ENCODE measurements at regions of chr17 and their contacts with region 1.

Region 1: DNA sequence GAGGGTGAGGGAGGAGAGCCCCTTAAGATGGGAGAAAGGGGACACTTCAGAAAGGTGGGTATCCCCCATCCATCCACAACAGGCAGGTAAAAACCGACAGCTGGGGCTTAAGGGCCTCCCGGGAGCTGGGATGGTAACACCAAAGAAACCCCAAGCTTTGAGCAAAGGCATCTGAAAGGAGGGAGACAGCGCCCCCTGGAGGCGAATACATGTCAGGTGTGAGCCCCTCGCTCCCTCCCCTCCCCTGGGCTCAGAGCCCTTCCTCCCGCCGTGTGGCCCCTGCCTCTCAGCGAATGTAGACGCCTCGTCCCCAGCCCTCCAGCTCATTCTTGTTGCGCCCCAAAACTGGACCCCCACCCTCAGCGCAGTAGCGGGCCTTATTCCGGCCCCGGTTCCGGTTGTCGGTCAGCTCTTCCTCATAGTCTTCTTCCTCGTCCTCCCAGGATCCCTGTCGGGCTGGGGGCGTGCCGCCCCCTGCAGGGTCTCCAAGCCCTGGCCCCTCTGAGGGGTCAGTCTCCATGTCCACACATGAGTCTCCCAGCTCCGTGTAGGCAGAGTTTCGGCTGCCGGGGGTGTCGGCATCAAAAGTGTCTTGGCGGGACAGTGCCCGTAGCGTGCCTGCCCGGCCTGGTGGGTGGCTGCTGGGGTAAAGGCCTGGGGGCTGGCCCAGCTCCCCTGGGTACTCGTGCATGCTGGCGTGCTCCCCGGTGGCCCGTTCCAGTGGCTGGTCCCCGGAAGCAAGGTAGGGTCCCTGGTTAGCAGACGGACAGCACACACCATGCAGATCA is 9.1 kb upstream of the ARL5C start:
- H3K4me3 ChIP-seq: no peak overlapping the region
- H3K27ac ChIP-seq: peak overlapping the region; percentile 11; the same call in 1 of the 2 replicates
- H3K4me1 ChIP-seq: 0 out of 2 replicates have a peak, but pooled peaks cover 7% of the 10 kb centered on the region
- CTCF ChIP-seq: peak; percentile 78

Region 2: DNA sequence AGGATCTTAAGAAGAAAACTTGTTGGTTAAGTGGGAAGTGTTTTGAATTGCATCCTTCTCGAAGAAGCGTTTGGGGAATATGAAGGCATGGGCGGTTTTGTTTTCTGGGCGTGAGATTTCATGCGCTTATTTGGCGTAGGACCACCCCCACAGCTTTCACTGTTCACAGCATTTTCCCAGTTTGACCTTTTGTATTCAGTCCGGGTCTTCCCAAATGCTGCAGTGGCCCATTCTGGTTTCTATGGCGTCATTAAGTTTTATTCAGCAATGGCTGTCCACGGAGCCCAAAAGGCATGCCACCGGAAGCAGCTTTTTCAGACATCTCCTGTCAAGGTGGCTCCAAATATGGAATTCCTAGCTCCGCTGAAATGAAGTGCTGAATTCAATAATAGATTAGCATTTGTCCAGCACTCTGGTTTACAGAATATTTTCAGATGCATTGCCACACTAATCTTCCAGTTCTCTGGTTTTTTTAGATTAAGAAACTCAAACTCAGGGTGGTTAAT is 117.3 kb before region 1 on chr17:
- CTCF ChIA-PET with region 1: no interaction called
- POLR2A ChIA-PET with region 1: no interaction called
- H3K4me3 ChIP-seq: peak overlapping the region; percentile 81
- H3K27ac ChIP-seq: no peak overlapping the region
- H3K4me1 ChIP-seq: peaks cover 3% of the 10 kb centered on the region
- CTCF ChIP-seq: no peak

Region 3: DNA sequence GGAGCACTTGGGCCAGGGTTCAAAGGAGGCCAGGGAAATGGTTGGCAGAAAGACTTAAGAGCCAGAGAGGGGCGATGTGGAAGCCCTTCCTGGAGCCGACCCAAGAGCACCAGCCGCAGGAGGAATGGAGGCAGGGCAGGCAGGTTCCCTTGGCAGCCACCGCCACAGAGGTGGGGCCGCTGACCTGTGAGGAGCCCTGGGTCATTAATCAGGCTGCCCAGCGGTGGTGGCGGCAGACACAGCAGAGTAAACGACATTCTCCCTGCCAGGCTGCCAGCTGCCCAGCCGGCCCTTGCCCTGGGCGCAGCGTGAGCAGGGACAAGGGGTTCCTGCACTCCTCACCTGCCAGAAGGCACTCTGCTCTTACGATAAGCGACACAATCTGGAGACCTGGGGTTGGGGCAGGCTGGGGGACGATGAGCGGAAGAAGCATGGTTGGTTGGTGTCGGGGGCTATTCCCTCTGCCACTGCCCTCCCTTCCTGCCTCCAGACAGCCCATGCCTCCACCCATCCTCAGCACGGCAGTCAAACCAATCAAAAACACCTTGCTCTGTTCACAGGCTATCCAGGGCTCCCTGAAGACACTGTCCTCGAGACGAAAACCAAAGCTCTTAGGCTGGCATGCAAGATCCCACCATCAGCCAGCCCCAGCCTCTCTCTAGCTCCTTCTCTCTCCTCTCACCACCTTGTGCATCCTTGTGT is 64.5 kb before region 1 on chr17:
- CTCF ChIA-PET with region 1: no interaction called
- POLR2A ChIA-PET with region 1: no interaction called
- H3K4me3 ChIP-seq: no peak overlapping the region
- H3K27ac ChIP-seq: no peak overlapping the region
- H3K4me1 ChIP-seq: no peaks in the 10 kb centered on the region
- CTCF ChIP-seq: no peak

Region 4: GRCh38 chr17:39164675-39165143 is 10.4 kb before region 1 on chr17:
- CTCF ChIA-PET with region 1: interaction called, 183 read pairs
- POLR2A ChIA-PET with region 1: interaction called, 8 read pairs
- H3K4me3 ChIP-seq: no peak overlapping the region
- H3K27ac ChIP-seq: no peak overlapping the region
- H3K4me1 ChIP-seq: 0 out of 2 replicates have a peak, but pooled peaks cover 4% of the 10 kb centered on the region
- CTCF ChIP-seq: peak; percentile 90

Region 5: GRCh38 chr17:39186481-39187002 is 11.4 kb after region 1 on chr17:
- CTCF ChIA-PET with region 1: interaction called, 23 read pairs
- POLR2A ChIA-PET with region 1: interaction called, 3 read pairs
- H3K4me3 ChIP-seq: no peak overlapping the region
- H3K27ac ChIP-seq: no peak overlapping the region
- H3K4me1 ChIP-seq: no peaks in the 10 kb centered on the region
- CTCF ChIP-seq: no peak

Region 6: DNA sequence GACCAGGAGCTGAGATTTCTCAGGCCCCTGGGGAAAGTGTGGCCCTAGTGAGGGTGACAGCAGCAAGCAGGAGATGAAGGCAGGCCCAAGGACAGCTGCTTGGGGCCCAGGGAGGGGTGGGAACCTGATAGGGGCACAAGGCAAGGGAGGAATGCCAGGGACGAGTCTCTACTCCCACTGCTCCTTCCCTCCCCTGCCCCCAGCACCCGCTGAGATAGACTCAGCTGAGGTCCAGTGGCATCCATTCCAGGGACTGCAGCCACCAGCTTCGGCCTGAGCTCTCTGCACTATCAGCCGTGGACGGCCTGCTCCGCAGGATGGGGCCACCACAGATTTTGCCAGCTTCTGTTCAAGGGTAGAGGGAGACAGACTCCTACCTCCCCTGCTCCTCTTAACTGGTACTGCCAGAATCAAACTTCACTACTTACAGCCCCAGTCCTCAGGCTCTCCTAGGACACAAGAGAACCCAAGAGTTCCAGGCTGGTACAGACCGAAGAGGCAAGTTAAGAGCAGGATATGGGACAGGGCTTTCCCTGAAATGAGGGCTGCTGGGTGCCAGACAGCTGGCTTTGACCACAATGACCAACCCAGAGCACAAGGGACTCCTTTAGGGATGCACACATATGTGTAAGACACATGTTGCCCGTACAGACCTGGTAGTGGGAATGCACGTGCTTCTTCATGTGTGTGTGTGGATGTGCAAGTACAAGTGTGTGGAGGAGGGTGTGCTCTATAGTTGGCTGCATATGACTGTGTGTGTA is 16.8 kb after region 1 on chr17:
- CTCF ChIA-PET with region 1: interaction called, 28 read pairs
- POLR2A ChIA-PET with region 1: interaction called, 4 read pairs
- H3K4me3 ChIP-seq: no peak overlapping the region
- H3K27ac ChIP-seq: no peak overlapping the region
- H3K4me1 ChIP-seq: peaks cover 19% of the 10 kb centered on the region; the same call in 1 of the 2 replicates
- CTCF ChIP-seq: no peak

Region 7: GRCh38 chr17:39385040-39385439 is 209.9 kb after region 1 on chr17:
- CTCF ChIA-PET with region 1: no interaction called
- POLR2A ChIA-PET with region 1: no interaction called
- H3K4me3 ChIP-seq: no peak overlapping the region
- H3K27ac ChIP-seq: no peak overlapping the region
- H3K4me1 ChIP-seq: no peaks in the 10 kb centered on the region
- CTCF ChIP-seq: no peak